A549 (cell line): ENCODE measurements at regions of chr7 and their contacts with region 1.

Region 1: DNA sequence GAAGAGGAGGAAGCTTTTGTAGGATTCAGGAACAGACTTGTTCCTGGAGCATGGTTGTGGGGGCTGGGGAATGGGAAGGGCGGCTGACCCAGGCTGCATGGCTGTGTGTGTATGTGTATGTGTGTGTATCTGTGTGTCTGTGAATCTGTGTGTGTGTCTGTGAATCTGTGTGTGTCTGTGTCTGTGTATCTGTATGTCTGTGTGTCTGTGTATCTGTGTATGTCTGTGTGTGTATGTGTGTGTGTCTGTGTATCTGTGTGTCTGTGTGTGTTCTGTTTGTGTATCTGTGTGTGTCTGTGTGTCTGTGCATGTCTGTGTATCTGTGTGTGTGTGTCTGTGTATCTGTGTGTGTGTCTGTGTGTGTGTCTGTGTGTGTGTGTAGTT is 6.6 kb upstream of the STX1A start:
- DNase-seq: no peak
- ATAC-seq: peak; percentile 56 to 61
- H3K4me3 ChIP-seq: no peak overlapping the region
- H3K27ac ChIP-seq: peak overlapping the region; percentile 27 to 74; a peak in 4 of 6 replicates
- H3K4me1 ChIP-seq: peaks cover 20% of the 10 kb centered on the region
- CTCF ChIP-seq: no peak
- EP300 ChIP-seq: no peak
- POLR2A ChIP-seq: no peak
- RAD21 ChIP-seq: no peak

Region 2: GRCh38 chr7:73593207-73594045 is 132.6 kb before region 1 on chr7:
- CTCF ChIA-PET with region 1: interaction called, 13 read pairs
- POLR2A ChIA-PET with region 1: interaction called, 3 read pairs
- DNase-seq: no peak
- ATAC-seq: peak in 1 of 2 experiments; percentile 24; a peak in 2 of 6 replicates
- H3K4me3 ChIP-seq: no peak overlapping the region
- H3K27ac ChIP-seq: no peak overlapping the region
- H3K4me1 ChIP-seq: no peaks in the 10 kb centered on the region
- CTCF ChIP-seq: no peak
- EP300 ChIP-seq: no peak
- POLR2A ChIP-seq: no peak
- RAD21 ChIP-seq: no peak

Region 3: GRCh38 chr7:73647725-73648592 is 78.1 kb before region 1 on chr7:
- CTCF ChIA-PET with region 1: interaction called, 29 read pairs
- POLR2A ChIA-PET with region 1: no interaction called
- DNase-seq: peak in 1 of 2 experiments; percentile 43
- ATAC-seq: peak; percentile 81 to 84
- H3K4me3 ChIP-seq: peak overlapping the region; percentile 68
- H3K27ac ChIP-seq: peak overlapping the region; percentile 91 to 95
- H3K4me1 ChIP-seq: peaks cover 13% of the 10 kb centered on the region; the same call in 2 of the 3 replicates
- CTCF ChIP-seq: peak; percentile 50
- EP300 ChIP-seq: no peak
- POLR2A ChIP-seq: no peak
- RAD21 ChIP-seq: peak in 1 of 2 experiments; percentile 49; a peak in 1 of 5 replicates

Region 4: DNA sequence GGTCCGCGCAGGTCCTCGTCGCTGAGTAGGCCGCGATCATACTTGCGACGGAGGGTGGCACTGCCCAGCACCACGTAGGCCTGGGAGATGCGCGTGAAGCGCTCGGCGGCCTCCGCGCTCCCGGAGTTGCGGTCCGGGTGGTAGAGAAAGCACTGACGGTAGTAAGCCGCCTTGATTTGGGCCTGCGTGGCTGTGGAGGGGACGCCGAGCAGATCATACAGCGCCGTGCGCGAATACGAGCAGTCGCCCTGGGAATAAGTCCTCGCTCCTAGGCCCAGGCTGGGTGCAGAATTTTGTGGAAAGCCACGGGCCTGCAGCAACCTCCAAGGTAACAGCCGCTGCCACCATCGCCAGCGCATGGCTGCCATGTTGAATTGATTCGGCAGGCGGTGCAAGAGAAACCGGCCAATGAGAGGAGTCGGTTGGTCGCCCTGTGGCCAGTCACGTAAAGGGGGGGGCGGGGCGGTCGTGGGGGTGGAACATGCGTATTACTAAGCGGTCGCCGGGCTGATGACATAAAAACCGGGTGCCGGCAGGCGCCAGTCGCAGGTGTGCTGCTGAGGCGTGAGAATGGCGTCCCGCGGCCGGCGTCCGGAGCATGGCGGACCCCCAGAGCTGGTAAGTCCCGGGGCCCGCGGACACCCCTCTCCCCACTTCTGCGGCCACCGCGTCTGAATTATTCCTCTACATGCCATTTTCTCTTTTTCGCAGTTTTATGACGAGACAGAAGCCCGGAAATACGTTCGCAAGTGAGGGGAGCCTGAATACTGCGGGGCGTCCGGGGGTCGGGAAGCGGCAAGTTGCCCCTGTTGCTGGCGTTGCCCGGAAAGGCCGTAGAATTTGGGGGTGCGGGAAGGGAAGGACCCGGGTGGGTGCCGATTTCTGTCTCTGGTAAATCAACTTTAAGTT is 42.8 kb before region 1 on chr7 and contains the starts of genes BUD23 and DNAJC30:
- CTCF ChIA-PET with region 1: interaction called, 15 read pairs
- POLR2A ChIA-PET with region 1: interaction called, 3 read pairs
- DNase-seq: peak; percentile 93 to 98
- ATAC-seq: peak; percentile 96
- H3K4me3 ChIP-seq: peak within 1 kb of the TSS; percentile 77
- H3K27ac ChIP-seq: peak within 1 kb of the TSS; percentile 92 to 93
- H3K4me1 ChIP-seq: peaks cover 33% of the 10 kb centered on the region
- CTCF ChIP-seq: no peak
- EP300 ChIP-seq: no peak
- POLR2A ChIP-seq: peak; percentile 77
- RAD21 ChIP-seq: no peak; a peak in 1 of 5 replicates
- polyA plus RNA-seq, gene BUD23: 131 and 161 TPM in 2 replicates
- polyA plus RNA-seq, gene DNAJC30: 5.2 and 5.7 TPM in 2 replicates

Region 5: GRCh38 chr7:73712773-73713172 is 13.3 kb before region 1 on chr7:
- CTCF ChIA-PET with region 1: interaction called, 22 read pairs
- POLR2A ChIA-PET with region 1: no interaction called
- DNase-seq: no peak
- ATAC-seq: no peak
- H3K4me3 ChIP-seq: no peak overlapping the region
- H3K27ac ChIP-seq: peak overlapping the region; percentile 99 to 100
- H3K4me1 ChIP-seq: peaks cover 96% of the 10 kb centered on the region
- CTCF ChIP-seq: no peak
- EP300 ChIP-seq: no peak
- POLR2A ChIP-seq: no peak
- RAD21 ChIP-seq: no peak

Region 6: GRCh38 chr7:73749931-73750776 is 24.1 kb after region 1 on chr7:
- CTCF ChIA-PET with region 1: no interaction called
- POLR2A ChIA-PET with region 1: no interaction called
- DNase-seq: no peak
- ATAC-seq: no peak
- H3K4me3 ChIP-seq: no peak overlapping the region
- H3K27ac ChIP-seq: no peak overlapping the region
- H3K4me1 ChIP-seq: no peaks in the 10 kb centered on the region
- CTCF ChIP-seq: no peak
- EP300 ChIP-seq: no peak
- POLR2A ChIP-seq: no peak
- RAD21 ChIP-seq: no peak